BJ (cell line): ENCODE measurements at regions of chr2 and their contacts with region 1.

Region 1: GRCh38 chr2:11697103-11697871 is 27.3 kb upstream of the NTSR2 start:
- DNase-seq: peak; percentile 34
- H3K4me3 ChIP-seq: no peak overlapping the region
- H3K27me3 ChIP-seq: no peaks in the 10 kb centered on the region
- CTCF ChIP-seq: no peak

Region 2: DNA sequence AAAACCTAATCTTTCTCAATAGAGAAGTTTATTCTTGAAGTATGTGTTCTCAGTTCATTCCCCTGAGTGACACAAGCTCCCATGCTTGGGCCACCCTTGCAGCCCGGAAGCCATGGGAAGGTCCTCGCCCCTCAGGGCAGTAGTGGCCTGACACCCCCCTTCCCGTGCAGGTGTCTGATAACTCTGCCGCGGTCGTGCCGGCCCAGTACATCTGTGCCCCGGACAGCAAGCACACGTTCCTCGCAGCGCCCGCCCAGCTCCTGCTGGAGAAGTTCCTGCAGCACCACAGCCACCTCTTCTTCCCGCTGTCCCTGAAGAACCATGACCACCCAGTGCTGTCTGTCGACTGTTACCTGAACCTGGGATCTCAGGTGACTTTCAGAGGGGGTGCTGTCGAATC is 59.7 kb before region 1 on chr2:
- CTCF ChIA-PET with region 1: no interaction called
- POLR2A ChIA-PET with region 1: no interaction called
- DNase-seq: no peak
- H3K4me3 ChIP-seq: no peak overlapping the region
- H3K27me3 ChIP-seq: no peaks in the 10 kb centered on the region; the same call in 1 of the 2 replicates
- CTCF ChIP-seq: no peak

Region 3: DNA sequence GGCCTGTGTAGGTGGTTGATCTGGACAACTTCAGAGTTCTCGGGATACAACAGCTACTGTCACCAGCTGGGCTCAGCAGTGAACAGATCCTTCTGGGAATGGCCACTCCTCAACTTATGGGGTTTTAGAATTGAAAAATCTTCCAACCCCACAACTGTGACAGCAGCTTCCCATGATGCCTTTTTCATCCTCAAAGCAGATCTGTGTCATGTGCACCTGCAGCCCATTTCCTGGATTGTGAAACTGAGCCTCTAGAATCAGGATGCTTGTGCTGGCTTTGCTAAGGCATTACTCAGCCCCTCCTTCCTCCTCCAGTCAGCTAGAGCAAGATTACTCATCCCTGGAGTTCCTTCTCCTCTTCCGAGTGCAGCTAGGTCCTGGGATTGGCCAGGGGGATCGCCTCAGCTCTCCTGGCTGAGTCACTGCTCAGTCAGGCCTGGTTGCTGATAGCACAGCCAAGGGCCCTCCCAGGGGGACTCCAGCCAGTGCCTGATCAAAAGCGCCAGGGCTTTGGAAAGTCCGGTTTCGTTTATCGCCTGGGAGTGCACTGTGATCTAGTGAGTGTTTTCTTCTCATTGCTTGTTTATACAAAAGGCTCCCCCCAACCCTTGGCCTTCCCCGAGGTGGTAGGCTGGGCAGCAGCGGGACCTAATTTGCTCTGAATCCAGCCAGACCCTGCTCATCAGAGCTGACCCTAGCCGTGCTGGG is 46.7 kb after region 1 on chr2:
- CTCF ChIA-PET with region 1: interaction called, 28 read pairs
- POLR2A ChIA-PET with region 1: no interaction called
- DNase-seq: peak; percentile 97
- H3K4me3 ChIP-seq: 0 out of 2 replicates have a peak overlapping the region, but pooled peaks have one; percentile 15
- H3K27me3 ChIP-seq: no peaks in the 10 kb centered on the region
- CTCF ChIP-seq: no peak

Region 4: DNA sequence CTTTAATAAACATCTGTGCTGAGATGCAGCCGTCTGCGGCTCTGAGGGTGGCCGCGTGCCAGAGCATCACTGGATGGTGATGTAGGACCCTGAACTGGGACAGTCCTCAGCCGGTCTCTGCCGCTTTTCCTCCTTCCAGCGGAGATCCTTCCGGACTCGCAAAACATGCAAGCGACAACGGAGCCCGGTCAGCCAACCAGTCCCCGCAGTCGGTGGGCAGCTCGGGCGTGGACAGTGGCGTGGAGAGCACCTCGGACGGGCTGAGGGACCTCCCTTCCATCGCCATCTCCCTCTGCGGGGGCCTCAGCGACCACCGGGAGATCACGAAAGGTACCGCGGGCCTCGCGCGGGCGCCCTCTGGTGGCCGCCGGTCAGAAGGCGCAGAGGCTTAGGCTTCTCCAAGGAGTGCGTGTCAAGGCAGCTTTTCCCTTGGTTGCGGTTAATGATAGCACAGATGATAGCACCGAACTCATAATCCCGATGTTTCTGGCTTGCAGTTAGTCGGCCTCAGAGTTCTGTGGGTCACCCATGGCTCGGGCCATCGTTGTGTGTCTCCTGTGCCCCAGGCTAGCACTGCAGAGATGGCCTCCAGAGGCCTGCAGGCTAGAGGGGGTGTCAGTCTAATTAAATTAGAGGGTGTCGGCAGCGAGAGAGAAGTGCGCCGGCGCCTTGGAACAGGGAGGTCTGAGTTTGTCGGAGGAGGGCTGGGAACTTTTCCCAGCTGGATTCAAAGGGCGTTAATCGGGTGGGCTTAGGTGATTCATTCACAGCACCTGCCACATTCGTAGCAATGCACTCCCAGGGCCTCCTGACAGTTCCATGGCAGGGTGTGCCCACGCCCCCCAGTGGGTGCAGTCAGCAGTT is 87.7 kb after region 1 on chr2:
- CTCF ChIA-PET with region 1: interaction called, 423 read pairs
- POLR2A ChIA-PET with region 1: no interaction called
- DNase-seq: no peak
- H3K4me3 ChIP-seq: peak overlapping the region; percentile 31
- H3K27me3 ChIP-seq: no peaks in the 10 kb centered on the region
- CTCF ChIP-seq: peak; percentile 99